GM10248 (cell line): ENCODE measurements at regions of chr9 and their contacts with region 1.

Region 1: DNA sequence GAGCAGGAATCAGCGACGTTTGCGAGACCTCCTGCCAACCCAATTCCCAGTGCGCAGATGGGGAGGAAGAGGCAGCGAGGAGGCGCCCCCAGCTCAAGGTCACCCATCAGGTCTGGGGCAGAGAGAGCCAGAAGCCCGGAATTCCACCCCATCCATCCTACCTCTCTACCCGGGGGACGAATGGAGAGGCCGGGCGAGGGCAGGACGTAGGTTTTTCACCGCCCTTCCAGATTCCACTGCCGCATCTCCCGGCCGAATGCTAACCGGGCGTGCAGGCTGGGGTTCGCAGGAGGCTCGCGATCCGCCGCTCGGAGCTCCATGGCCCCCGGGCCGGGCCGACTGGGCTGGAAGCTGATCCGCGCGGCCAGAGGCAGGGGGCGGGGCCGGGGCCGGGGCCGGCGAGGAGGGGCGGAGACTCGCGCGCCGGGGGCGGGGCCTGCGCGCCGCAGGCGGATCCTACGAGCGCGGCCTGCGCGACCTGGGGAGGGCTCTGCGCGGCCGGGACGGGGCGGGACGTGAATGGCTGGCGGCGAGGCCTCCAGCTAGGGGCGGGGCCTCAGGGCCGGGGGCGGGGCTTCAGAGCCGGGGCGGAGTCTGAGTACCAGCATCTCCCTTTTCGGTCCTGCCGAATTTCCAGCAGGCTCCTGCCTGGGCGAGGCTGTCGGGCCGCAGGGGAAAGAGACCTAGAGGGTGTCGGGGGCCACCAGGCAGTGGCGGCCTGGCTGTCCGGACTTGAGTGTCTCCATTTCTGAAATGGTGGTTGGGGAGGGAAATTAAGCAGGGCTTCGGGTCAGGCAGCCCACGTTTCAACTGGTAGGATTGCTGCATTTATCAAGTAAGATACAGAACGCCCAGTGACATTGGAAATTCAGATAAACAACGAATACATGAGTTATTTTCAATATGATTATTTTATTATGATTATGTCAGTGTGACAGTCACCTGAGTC is at the start of gene ST6GALNAC4:
- DNase-seq: peak; percentile 99
- CTCF ChIP-seq: no peak

Region 2: GRCh38 chr9:127586537-127586936 is 330.4 kb before region 1 on chr9:
- CTCF ChIA-PET with region 1: interaction called, 11 read pairs
- POLR2A ChIA-PET with region 1: no interaction called
- DNase-seq: peak; percentile 78
- CTCF ChIP-seq: peak; percentile 90

Region 3: GRCh38 chr9:127742435-127743088 is 174.4 kb before region 1 on chr9:
- CTCF ChIA-PET with region 1: interaction called, 13 read pairs
- POLR2A ChIA-PET with region 1: no interaction called
- DNase-seq: no peak
- CTCF ChIP-seq: no peak

Region 4: GRCh38 chr9:127763918-127764384 is 153.0 kb before region 1 on chr9:
- CTCF ChIA-PET with region 1: interaction called, 46 read pairs
- POLR2A ChIA-PET with region 1: interaction called, 3 read pairs
- DNase-seq: peak; percentile 45
- CTCF ChIP-seq: peak; percentile 62

Region 5: DNA sequence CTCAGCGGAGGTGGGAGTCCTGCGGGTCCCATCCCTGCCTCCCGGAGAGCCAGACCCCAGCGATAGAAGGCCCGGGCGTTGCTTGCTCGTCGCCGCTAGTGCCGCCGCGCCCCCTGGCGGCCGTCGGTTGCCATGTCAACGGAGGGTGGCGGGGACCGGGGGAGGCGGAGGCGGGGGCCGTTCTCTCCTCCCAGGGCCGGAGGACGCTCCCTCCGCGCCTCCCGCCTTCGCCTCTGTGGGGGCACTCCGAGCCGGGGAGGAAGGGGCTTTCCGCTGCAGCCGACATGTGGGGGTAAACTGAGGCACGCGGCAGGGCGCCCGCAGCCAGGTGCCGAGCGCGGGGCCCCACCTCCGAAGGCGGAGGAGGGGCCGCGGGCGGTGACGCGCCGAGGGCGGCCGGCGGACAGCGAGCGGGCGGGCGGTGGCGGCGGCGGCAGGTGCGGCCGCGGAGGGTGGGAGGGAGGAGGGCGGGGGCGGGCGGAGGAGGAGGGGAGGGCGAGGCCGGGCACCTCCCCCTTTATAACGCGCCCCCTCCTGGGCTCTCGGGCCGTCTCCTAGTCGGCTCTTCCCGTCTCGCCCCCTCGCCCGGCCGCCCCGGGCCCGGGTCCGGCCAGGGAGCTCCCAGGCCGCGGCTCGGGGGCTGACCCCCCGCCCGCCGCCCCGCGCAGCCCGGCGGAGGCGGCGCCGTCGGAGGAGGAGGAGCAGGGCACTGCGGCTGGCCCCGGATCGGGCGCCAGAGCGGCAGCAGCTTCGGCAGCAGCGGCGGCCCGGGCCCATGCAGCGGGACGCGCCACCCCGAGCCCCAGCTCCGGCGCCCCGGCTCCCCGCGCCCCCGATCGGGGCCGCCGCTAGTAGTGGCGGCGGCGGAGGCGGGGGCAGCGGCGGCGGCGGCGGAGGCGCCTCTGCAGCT is 131.7 kb before region 1 on chr9:
- CTCF ChIA-PET with region 1: interaction called, 11 read pairs
- POLR2A ChIA-PET with region 1: interaction called, 4 read pairs
- DNase-seq: peak; percentile 88
- CTCF ChIP-seq: peak; percentile 75

Region 6: GRCh38 chr9:127899128-127899946 is 17.6 kb before region 1 on chr9 and contains the start of gene ST6GALNAC6:
- CTCF ChIA-PET with region 1: interaction called, 14 read pairs
- POLR2A ChIA-PET with region 1: interaction called, 7 read pairs
- DNase-seq: peak; percentile 93
- CTCF ChIP-seq: no peak

Region 7: GRCh38 chr9:127930231-127931091 is 13.5 kb after region 1 on chr9 and contains the start of gene PIP5KL1:
- CTCF ChIA-PET with region 1: interaction called, 10 read pairs
- POLR2A ChIA-PET with region 1: interaction called, 4 read pairs
- DNase-seq: peak; percentile 95
- CTCF ChIP-seq: peak; percentile 10

Region 8: DNA sequence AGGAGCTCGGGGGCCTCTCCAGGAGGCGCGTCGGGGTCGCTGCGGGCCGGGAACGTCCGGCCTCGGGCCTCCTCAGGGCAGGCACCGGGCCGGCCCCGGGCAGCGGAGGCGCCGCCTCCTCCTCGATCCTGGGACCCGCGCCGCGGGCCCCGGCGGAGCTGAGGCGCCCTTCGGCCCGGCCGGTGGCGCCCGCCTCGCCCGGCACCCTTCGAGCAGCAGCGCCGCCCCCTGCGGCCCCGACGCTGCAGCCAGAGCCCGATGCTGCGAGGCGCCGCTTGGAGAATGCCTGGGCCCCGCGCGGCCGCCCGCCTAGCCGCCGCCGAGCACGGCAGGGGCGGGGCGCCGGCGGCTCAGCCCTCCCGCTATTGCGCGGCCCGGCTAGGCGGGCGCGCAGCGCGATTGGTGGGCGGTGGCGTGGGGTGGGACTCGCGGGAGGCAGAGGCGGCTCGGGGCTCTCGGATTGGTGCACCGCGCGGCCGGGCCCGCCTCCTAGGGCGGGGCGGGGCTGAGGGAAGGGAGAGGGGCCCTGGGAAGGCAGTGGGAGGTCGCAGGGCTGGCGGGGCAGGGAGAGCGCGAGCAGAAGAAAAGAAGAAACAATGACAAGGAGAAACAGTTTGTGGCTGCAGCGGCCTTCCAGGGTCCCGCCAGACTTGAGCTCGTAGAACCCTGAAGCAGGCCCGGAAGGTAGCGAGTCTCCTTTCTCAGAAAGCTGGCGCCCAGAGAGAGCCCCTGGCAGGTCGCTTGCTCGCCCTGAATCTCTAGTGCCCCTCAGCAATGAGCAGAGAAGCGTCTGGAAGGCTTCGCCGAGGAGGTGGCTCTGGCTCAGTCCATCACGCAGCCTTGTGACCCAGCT is 64.0 kb after region 1 on chr9 and contains the start of gene EEIG1:
- CTCF ChIA-PET with region 1: no interaction called
- POLR2A ChIA-PET with region 1: no interaction called
- DNase-seq: peak; percentile 97
- CTCF ChIP-seq: no peak